Heart left ventricle (tissue), 16 donors: ENCODE measurements at regions of chr20 and their contacts with region 1.

Region 1: GRCh38 chr20:33731693-33732165 is at the start of gene ZNF341:
- DNase-seq: peak; percentile 88 to 94 (median 92)
- ATAC-seq: peak; percentile 72 to 91 (median 88)
- H3K4me3 ChIP-seq: peak within 1 kb of the TSS; percentile 47 to 71 (median 64)
- H3K27ac ChIP-seq: peak within 1 kb of the TSS; percentile 86 to 99 (median 92)
- H3K4me1 ChIP-seq: peaks cover 0 to 29% (median 20%) of the 10 kb centered on the region in 12 donors
- H3K27me3 ChIP-seq: no peaks in the 10 kb centered on the region
- CTCF ChIP-seq: peak; percentile 82 to 97 (median 90)
- POLR2A ChIP-seq: no peak
- total RNA-seq, gene ZNF341: 1.2 to 3.3 (median 1.5) TPM

Region 2: DNA sequence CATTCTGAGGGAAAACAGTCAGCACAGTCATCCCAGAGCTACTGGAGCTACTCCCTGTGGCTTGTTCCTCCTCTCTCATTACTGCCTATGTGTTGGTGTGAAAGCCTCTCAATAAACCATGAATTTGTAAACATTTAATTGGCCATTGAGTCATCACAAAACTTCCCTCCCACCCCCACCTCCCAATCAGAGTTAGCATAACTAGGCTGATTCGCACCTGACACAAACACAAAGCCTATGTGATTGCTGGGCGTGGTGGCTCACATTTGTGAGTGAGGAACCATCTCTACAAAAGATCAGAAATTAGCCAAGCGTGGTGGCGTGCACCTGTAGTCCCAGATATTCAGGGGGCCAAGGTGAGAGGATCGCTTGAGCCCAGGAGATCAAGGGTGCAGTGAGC is 271.0 kb before region 1 on chr20:
- intact Hi-C with region 1: loop called in 2 of 10 experiments (anchors 5 kb)
- DNase-seq: no peak
- ATAC-seq: no peak
- H3K4me3 ChIP-seq: no peak overlapping the region
- H3K27ac ChIP-seq: no peak overlapping the region
- H3K4me1 ChIP-seq: peaks cover 0 to 16% (median 3%) of the 10 kb centered on the region in 12 donors
- H3K27me3 ChIP-seq: no peaks in the 10 kb centered on the region
- CTCF ChIP-seq: no peak
- POLR2A ChIP-seq: no peak

Region 3: GRCh38 chr20:33666293-33667244 is 65.2 kb before region 1 on chr20 and contains the start of gene ACTL10:
- intact Hi-C with region 1: loop called in 3 of 10 experiments (anchors 5 kb)
- DNase-seq: peak; percentile 97 to 99 (median 97)
- ATAC-seq: peak; percentile 76 to 86 (median 82)
- H3K4me3 ChIP-seq: peak within 1 kb of the TSS; percentile 19 to 74 (median 62)
- H3K27ac ChIP-seq: peak within 1 kb of the TSS; percentile 25 to 94 (median 84)
- H3K4me1 ChIP-seq: peaks cover 3 to 62% (median 36%) of the 10 kb centered on the region in 12 donors
- H3K27me3 ChIP-seq: no peaks in the 10 kb centered on the region
- CTCF ChIP-seq: peak in 8 of 12 donors; percentile 9 to 66 (median 32)
- POLR2A ChIP-seq: peak in 1 of 2 donors; percentile 97
- total RNA-seq, gene ACTL10: 0.13 to 1.1 (median 0.36) TPM

Region 4: GRCh38 chr20:33674295-33675135 is 57.2 kb before region 1 on chr20 and contains the start of gene NECAB3:
- intact Hi-C with region 1: loop called in 3 of 10 experiments (anchors 5 kb)
- DNase-seq: peak; percentile 86 to 93 (median 89)
- ATAC-seq: peak; percentile 53 to 91 (median 78)
- H3K4me3 ChIP-seq: peak within 1 kb of the TSS; percentile 50 to 95 (median 72)
- H3K27ac ChIP-seq: peak within 1 kb of the TSS; percentile 75 to 95 (median 90)
- H3K4me1 ChIP-seq: peaks cover 0 to 43% (median 29%) of the 10 kb centered on the region in 12 donors
- H3K27me3 ChIP-seq: no peaks in the 10 kb centered on the region
- CTCF ChIP-seq: peak in 1 of 12 donors; percentile 4
- POLR2A ChIP-seq: peak in 1 of 2 donors; percentile 64
- total RNA-seq, gene NECAB3: 54.5 to 111 (median 74.8) TPM

Region 5: GRCh38 chr20:33810885-33811777 is 79.4 kb after region 1 on chr20 and contains the start of gene CHMP4B:
- intact Hi-C with region 1: loop called in 1 of 10 experiments (anchors 5 kb)
- DNase-seq: peak; percentile 99 to 100 (median 99)
- ATAC-seq: peak; percentile 97 to 99 (median 98)
- H3K4me3 ChIP-seq: peak within 1 kb of the TSS; percentile 75 to 99 (median 91)
- H3K27ac ChIP-seq: peak within 1 kb of the TSS; percentile 76 to 98 (median 94)
- H3K4me1 ChIP-seq: peaks cover 4 to 49% (median 36%) of the 10 kb centered on the region in 12 donors
- H3K27me3 ChIP-seq: no peaks in the 10 kb centered on the region
- CTCF ChIP-seq: no peak
- POLR2A ChIP-seq: peak in 1 of 2 donors; percentile 90
- total RNA-seq, gene CHMP4B: 46.2 to 225 (median 106) TPM

Region 6: DNA sequence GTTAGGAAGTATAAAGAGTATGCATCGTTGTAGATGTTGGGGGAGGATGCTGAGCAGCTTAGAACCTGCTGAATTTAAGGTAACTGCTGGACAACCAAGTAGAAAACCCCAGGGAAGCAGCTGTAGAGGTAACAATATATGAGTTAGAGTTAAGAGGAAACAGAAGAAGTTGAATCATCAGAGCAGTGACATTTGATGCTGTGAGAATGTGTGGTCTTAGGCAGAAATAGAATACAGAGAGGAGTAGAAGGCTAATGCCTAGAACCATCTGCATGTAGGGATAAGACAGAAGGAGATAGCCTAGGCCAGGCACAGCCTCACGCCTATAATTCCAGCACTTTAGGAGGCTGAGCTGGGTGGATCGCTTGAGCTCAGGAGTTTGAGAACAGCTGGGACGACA is 761.9 kb after region 1 on chr20:
- intact Hi-C with region 1: no loop called
- DNase-seq: no peak
- ATAC-seq: no peak
- H3K4me3 ChIP-seq: no peak overlapping the region
- H3K27ac ChIP-seq: no peak overlapping the region
- H3K4me1 ChIP-seq: no peaks in the 10 kb centered on the region
- H3K27me3 ChIP-seq: no peaks in the 10 kb centered on the region
- CTCF ChIP-seq: no peak
- POLR2A ChIP-seq: no peak